H1 (cell line): ENCODE measurements at regions of chr1 and their contacts with region 1.

Region 1: DNA sequence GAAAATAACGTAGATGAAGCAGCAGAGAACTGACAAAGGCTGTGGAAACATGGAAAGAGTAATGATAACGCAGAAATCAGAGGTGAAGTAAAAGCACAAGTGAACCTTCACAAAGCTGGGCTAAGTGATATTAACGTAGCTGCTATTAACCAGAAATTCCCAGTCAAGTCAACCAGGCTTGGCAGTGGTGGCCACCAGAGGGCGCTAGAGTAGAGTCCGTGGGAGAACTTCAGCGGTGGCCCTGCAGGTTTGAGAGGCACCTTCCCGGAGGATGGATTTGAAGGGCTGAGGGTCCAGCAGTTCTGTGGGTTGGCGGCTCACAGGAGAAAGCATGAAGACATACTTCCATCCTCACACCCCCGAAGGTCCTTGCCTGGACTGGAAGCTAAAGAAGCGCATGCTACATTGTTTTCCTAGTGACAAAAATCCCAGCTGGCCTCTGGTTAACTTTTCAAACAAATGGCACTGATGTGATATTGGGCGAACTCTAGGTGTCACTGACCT is 81.7 kb upstream of the ZNF648 start:
- DNase-seq: peak; percentile 67 to 97
- H3K4me3 ChIP-seq: no peak overlapping the region
- H3K27ac ChIP-seq: no peak overlapping the region
- H3K4me1 ChIP-seq: peaks cover 0 to 8% (median 6%) of the 10 kb centered on the region in 4 experiments; a peak in 5 of 7 replicates
- H3K27me3 ChIP-seq: no peaks in the 10 kb centered on the region
- CTCF ChIP-seq: peak; percentile 84 to 96 (median 92)
- EP300 ChIP-seq: no peak
- POLR2A ChIP-seq: no peak
- RAD21 ChIP-seq: peak; percentile 89 to 96

Region 2: DNA sequence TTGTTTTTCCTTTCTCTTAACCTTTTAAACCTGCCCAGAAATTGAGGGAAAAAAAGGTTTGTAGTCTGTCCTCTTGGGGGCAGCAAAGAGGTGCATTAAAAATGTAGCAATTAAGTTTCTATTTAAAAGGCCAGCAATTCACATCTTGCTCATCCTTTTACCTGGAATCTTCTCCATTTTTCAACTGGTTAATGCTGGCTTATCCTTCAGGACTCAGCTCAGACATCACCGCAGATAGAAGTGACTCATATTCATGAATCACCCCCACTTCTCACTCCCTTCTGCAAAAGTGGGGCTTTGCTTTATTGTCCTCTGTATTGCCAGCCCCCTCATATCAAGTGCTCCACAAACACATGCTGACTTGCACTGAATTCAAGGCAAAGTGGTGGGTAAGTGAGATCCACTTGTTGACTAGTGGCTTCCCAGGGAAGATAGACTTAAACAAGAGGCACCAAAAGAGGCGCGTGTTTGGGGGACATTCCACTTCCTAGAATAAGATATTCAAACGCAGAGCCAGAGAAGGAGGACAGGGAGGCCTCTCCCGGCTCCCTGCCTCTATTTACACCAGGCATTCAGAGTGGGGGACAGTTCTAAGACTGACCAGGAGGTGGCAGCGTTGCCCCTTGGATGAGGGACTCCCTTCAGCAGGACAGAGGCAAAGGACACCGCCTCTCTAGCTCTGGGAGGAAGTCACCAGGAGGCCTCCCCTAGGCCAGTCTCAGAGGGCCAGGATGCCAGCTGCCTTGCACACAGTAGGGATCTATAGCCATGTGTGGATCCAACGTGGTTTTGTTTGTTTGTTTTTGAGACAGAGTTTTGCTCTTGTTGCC is 58.5 kb before region 1 on chr1:
- CTCF ChIA-PET with region 1: interaction called, 54 read pairs
- POLR2A ChIA-PET with region 1: interaction called, 5 read pairs
- DNase-seq: peak; percentile 86 to 98
- H3K4me3 ChIP-seq: no peak overlapping the region; a peak in 1 of 8 replicates
- H3K27ac ChIP-seq: peak overlapping the region; percentile 51; the same call in 1 of the 2 replicates
- H3K4me1 ChIP-seq: peaks cover 0 to 11% (median 4%) of the 10 kb centered on the region in 4 experiments; a peak in 4 of 7 replicates
- H3K27me3 ChIP-seq: no peaks in the 10 kb centered on the region
- CTCF ChIP-seq: peak; percentile 76 to 90 (median 89)
- EP300 ChIP-seq: no peak
- POLR2A ChIP-seq: no peak
- RAD21 ChIP-seq: peak; percentile 99 to 100

Region 3: GRCh38 chr1:182159443-182159842 is 16.2 kb after region 1 on chr1:
- CTCF ChIA-PET with region 1: interaction called, 29 read pairs
- POLR2A ChIA-PET with region 1: no interaction called
- DNase-seq: no peak
- H3K4me3 ChIP-seq: no peak overlapping the region
- H3K27ac ChIP-seq: no peak overlapping the region
- H3K4me1 ChIP-seq: no peaks in the 10 kb centered on the region
- H3K27me3 ChIP-seq: no peaks in the 10 kb centered on the region
- CTCF ChIP-seq: no peak
- EP300 ChIP-seq: no peak
- POLR2A ChIP-seq: no peak
- RAD21 ChIP-seq: no peak

Region 4: GRCh38 chr1:182198049-182198501 is 54.9 kb after region 1 on chr1:
- CTCF ChIA-PET with region 1: interaction called, 50 read pairs
- POLR2A ChIA-PET with region 1: no interaction called
- DNase-seq: no peak
- H3K4me3 ChIP-seq: no peak overlapping the region
- H3K27ac ChIP-seq: no peak overlapping the region
- H3K4me1 ChIP-seq: no peaks in the 10 kb centered on the region
- H3K27me3 ChIP-seq: no peaks in the 10 kb centered on the region
- CTCF ChIP-seq: peak in 2 of 3 experiments; percentile 40 to 65; a peak in 2 of 4 replicates
- EP300 ChIP-seq: no peak
- POLR2A ChIP-seq: no peak
- RAD21 ChIP-seq: peak; percentile 51 to 58

Region 5: GRCh38 chr1:182217967-182218366 is 74.8 kb after region 1 on chr1:
- CTCF ChIA-PET with region 1: no interaction called
- POLR2A ChIA-PET with region 1: no interaction called
- DNase-seq: no peak
- H3K4me3 ChIP-seq: no peak overlapping the region
- H3K27ac ChIP-seq: no peak overlapping the region
- H3K4me1 ChIP-seq: no peaks in the 10 kb centered on the region
- H3K27me3 ChIP-seq: no peaks in the 10 kb centered on the region
- CTCF ChIP-seq: no peak
- EP300 ChIP-seq: no peak
- POLR2A ChIP-seq: no peak
- RAD21 ChIP-seq: no peak

Region 6: DNA sequence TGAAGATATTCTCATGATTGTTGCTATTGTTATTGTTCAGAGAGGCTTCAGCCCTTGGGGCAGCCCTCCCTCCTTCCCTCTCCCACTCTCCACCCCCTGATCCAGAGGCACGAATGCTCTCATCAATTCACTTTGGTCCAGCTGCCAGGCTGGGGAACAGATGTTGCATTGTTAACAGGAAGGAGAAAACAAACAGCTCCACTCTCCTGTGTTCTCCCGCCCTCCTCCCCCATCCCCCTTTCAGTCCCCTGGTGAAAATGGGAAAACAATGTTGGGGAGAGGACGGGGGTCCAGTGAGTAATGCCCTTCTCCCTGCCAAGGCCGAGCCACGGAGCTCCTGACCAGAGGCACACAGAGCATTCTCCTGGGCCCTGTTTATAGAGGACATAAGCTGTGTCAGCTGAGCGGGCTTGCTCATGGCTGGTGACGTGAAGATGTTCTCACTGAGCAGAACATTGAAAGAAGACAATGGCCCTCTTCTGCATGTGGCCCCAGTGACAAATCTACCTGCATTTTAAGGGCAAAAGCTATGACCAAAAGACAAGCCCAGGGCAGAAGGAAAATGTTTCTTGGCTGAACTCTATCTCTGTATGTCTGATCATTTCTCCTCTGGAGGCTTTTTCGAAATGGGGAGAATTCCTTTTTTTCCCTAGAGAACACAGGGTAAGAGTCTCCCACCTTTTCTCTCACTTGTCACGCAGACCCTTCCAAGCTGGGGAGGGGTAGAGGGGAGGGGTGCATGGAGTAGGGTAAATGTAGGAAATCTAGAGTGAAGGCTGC is 136.7 kb after region 1 on chr1:
- CTCF ChIA-PET with region 1: interaction called, 14 read pairs
- POLR2A ChIA-PET with region 1: no interaction called
- DNase-seq: no peak
- H3K4me3 ChIP-seq: no peak overlapping the region
- H3K27ac ChIP-seq: no peak overlapping the region
- H3K4me1 ChIP-seq: peaks cover 2 to 5% (median 3%) of the 10 kb centered on the region in 4 experiments; a peak in 5 of 7 replicates
- H3K27me3 ChIP-seq: peaks cover 0 to 1% (median 0%) of the 10 kb centered on the region in 4 experiments; a peak in 1 of 7 replicates
- CTCF ChIP-seq: no peak
- EP300 ChIP-seq: no peak
- POLR2A ChIP-seq: no peak
- RAD21 ChIP-seq: no peak

Region 7: GRCh38 chr1:182391362-182392044 is 248.3 kb after region 1 on chr1 and contains the start of gene GLUL:
- CTCF ChIA-PET with region 1: interaction called, 107 read pairs
- POLR2A ChIA-PET with region 1: interaction called, 17 read pairs
- DNase-seq: peak; percentile 89 to 94
- H3K4me3 ChIP-seq: peak within 1 kb of the TSS; percentile 68 to 99 (median 96)
- H3K27ac ChIP-seq: peak within 1 kb of the TSS; percentile 97
- H3K4me1 ChIP-seq: peaks cover 4 to 12% (median 8%) of the 10 kb centered on the region in 4 experiments; a peak in 5 of 7 replicates
- H3K27me3 ChIP-seq: no peaks in the 10 kb centered on the region; a peak in 1 of 7 replicates
- CTCF ChIP-seq: no peak
- EP300 ChIP-seq: no peak
- POLR2A ChIP-seq: peak; percentile 99
- RAD21 ChIP-seq: no peak
- total RNA-seq, gene GLUL: 453 and 457 TPM in 2 replicates